ENCODE measurements at regions of chr9 and their contacts with region 1.

Region 1: GRCh38 chr9:128688512-128689292 is at the start of gene SET:
- DNase-seq: peak; percentile 90
- H3K4me3 ChIP-seq: peak within 1 kb of the TSS; percentile 79 to 92 (median 81)
- H3K27ac ChIP-seq: peak within 1 kb of the TSS; percentile 58
- H3K4me1 ChIP-seq: peaks cover 35% of the 10 kb centered on the region
- H3K27me3 ChIP-seq: no peaks in the 10 kb centered on the region
- CTCF ChIP-seq: no peak
- total RNA-seq, gene SET: 282 to 484 TPM

Region 2: GRCh38 chr9:128643519-128644300 is 45.0 kb before region 1 on chr9:
- CTCF ChIA-PET with region 1: no interaction called
- dilution Hi-C with region 1: loop called (anchors 5 kb)
- in situ Hi-C with region 1: no loop called
- intact Hi-C with region 1: no loop called
- DNase-seq: no peak
- H3K4me3 ChIP-seq: no peak overlapping the region
- H3K27ac ChIP-seq: no peak overlapping the region
- H3K4me1 ChIP-seq: no peaks in the 10 kb centered on the region
- H3K27me3 ChIP-seq: no peaks in the 10 kb centered on the region
- CTCF ChIP-seq: no peak

Region 3: DNA sequence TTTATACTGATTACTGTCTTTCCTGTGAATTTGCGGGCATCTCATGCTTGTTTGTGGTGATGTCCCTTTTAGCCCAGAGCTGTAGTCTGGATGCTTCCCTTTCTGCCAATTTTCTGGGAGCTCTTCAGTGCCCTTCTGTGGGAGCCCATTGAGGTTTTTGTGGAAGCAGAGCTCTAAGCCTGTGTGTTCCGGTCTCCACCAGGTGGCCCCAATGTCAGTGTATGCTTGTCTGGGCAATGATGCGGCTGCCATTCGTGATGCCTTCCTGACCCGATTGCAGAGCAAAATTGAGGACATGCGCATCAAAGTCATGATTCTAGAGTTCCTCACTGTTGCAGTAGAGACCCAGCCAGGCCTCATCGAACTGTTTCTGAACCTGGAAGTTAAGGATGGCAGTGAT is 304.3 kb after region 1 on chr9:
- CTCF ChIA-PET with region 1: no interaction called
- dilution Hi-C with region 1: no loop called
- in situ Hi-C with region 1: no loop called
- intact Hi-C with region 1: no loop called
- DNase-seq: peak; percentile 44
- H3K4me3 ChIP-seq: no peak overlapping the region
- H3K27ac ChIP-seq: no peak overlapping the region
- H3K4me1 ChIP-seq: peaks cover 15% of the 10 kb centered on the region
- H3K27me3 ChIP-seq: no peaks in the 10 kb centered on the region
- CTCF ChIP-seq: peak; percentile 39 to 78